GM12878 (cell line): ENCODE measurements at regions of chr1 and their contacts with region 1.

Region 1: GRCh38 chr1:192506741-192507155 is 68.8 kb upstream of the RGS1 start:
- DNase-seq: peak; percentile 66
- ATAC-seq: peak; percentile 99
- H3K4me3 ChIP-seq: no peak overlapping the region
- H3K27ac ChIP-seq: no peak overlapping the region
- H3K4me1 ChIP-seq: no peaks in the 10 kb centered on the region; the same call in 1 of the 2 replicates
- H3K27me3 ChIP-seq: no peaks in the 10 kb centered on the region
- CTCF ChIP-seq: peak; percentile 69 to 93 (median 70); a peak in 5 of 6 replicates
- EP300 ChIP-seq: no peak
- POLR2A ChIP-seq: no peak
- RAD21 ChIP-seq: peak; percentile 98

Region 2: GRCh38 chr1:192407206-192407605 is 99.5 kb before region 1 on chr1:
- CTCF ChIA-PET with region 1: no interaction called
- POLR2A ChIA-PET with region 1: no interaction called
- RAD21 ChIA-PET with region 1: no interaction called
- SMC1A ChIA-PET with region 1: no interaction called
- in situ Hi-C with region 1: no loop called
- intact Hi-C with region 1: no loop called
- DNase-seq: no peak
- ATAC-seq: no peak
- H3K4me3 ChIP-seq: no peak overlapping the region
- H3K27ac ChIP-seq: no peak overlapping the region
- H3K4me1 ChIP-seq: no peaks in the 10 kb centered on the region
- H3K27me3 ChIP-seq: no peaks in the 10 kb centered on the region
- CTCF ChIP-seq: no peak
- EP300 ChIP-seq: no peak
- POLR2A ChIP-seq: no peak
- RAD21 ChIP-seq: no peak

Region 3: GRCh38 chr1:192491804-192492554 is 14.8 kb before region 1 on chr1:
- CTCF ChIA-PET with region 1: interaction called, 16 read pairs
- POLR2A ChIA-PET with region 1: no interaction called
- RAD21 ChIA-PET with region 1: interaction called, 4 read pairs
- SMC1A ChIA-PET with region 1: interaction called, 8 read pairs
- in situ Hi-C with region 1: no loop called
- intact Hi-C with region 1: no loop called
- DNase-seq: no peak
- ATAC-seq: no peak
- H3K4me3 ChIP-seq: no peak overlapping the region
- H3K27ac ChIP-seq: no peak overlapping the region
- H3K4me1 ChIP-seq: no peaks in the 10 kb centered on the region
- H3K27me3 ChIP-seq: no peaks in the 10 kb centered on the region
- CTCF ChIP-seq: no peak
- EP300 ChIP-seq: no peak
- POLR2A ChIP-seq: no peak
- RAD21 ChIP-seq: no peak

Region 4: DNA sequence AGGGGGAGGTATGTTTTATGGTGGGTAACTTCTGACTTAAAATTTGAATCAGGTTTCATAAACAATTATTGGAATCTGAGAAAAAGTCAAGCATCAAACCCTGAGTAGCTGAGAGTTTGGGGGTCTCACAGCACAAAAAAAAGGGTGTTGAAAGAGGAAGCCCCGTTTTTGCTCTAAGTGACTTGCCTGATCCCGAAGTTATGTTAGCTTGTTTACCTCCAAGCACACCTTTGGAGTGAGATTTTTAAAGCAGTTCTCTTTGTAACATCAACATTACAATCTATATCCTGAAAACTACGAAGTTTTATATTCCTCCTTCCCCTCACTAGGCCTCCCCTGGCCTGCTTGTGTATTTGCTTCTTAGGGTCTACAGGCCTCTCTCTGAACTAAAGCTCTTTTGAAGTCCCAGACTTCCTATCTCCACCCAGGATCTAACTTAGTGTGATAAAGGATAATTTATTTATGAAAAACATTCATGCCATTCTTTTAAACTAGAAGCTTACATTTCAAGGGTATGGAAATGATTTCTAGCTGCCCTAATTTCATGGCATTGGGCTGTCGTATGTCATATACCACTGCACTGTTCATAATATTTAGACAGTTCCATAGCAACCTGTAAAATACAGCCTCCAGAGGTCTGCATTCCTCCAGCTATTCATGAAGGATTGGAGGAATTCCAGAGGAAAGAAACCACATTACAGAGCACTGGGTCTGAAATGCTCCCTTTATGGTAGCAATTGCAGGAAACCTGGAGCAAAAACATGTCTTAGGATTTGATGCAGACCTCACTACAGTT is 32.7 kb after region 1 on chr1:
- CTCF ChIA-PET with region 1: interaction called, 78 read pairs
- POLR2A ChIA-PET with region 1: interaction called, 10 read pairs
- RAD21 ChIA-PET with region 1: interaction called, 288 read pairs
- SMC1A ChIA-PET with region 1: interaction called, 81 read pairs
- in situ Hi-C with region 1: no loop called
- intact Hi-C with region 1: no loop called
- DNase-seq: no peak
- ATAC-seq: peak; percentile 40
- H3K4me3 ChIP-seq: no peak overlapping the region
- H3K27ac ChIP-seq: peak overlapping the region; percentile 81
- H3K4me1 ChIP-seq: peaks cover 24% of the 10 kb centered on the region
- H3K27me3 ChIP-seq: no peaks in the 10 kb centered on the region
- CTCF ChIP-seq: no peak
- EP300 ChIP-seq: no peak
- POLR2A ChIP-seq: no peak
- RAD21 ChIP-seq: no peak

Region 5: GRCh38 chr1:192550922-192551534 is 44.3 kb after region 1 on chr1:
- CTCF ChIA-PET with region 1: interaction called, 18 read pairs
- POLR2A ChIA-PET with region 1: interaction called, 123 read pairs
- RAD21 ChIA-PET with region 1: interaction called, 288 read pairs
- SMC1A ChIA-PET with region 1: interaction called, 81 read pairs
- in situ Hi-C with region 1: no loop called
- intact Hi-C with region 1: no loop called
- DNase-seq: peak; percentile 89
- ATAC-seq: peak; percentile 56
- H3K4me3 ChIP-seq: no peak overlapping the region
- H3K27ac ChIP-seq: peak overlapping the region; percentile 88
- H3K4me1 ChIP-seq: peaks cover 48% of the 10 kb centered on the region
- H3K27me3 ChIP-seq: no peaks in the 10 kb centered on the region
- CTCF ChIP-seq: no peak
- EP300 ChIP-seq: peak; percentile 71 to 85; a peak in 2 of 4 replicates
- POLR2A ChIP-seq: 0 out of 2 replicates have a peak, but pooled peaks have one; percentile 13
- RAD21 ChIP-seq: no peak

Region 6: GRCh38 chr1:192580351-192580962 is 73.7 kb after region 1 on chr1:
- CTCF ChIA-PET with region 1: interaction called, 35 read pairs
- POLR2A ChIA-PET with region 1: interaction called, 7 read pairs
- RAD21 ChIA-PET with region 1: interaction called, 35 read pairs
- SMC1A ChIA-PET with region 1: interaction called, 35 read pairs
- in situ Hi-C with region 1: no loop called
- intact Hi-C with region 1: loop called (anchors 1 kb)
- DNase-seq: peak; percentile 81
- ATAC-seq: peak; percentile 33
- H3K4me3 ChIP-seq: peak overlapping the region; percentile 31; the same call in 1 of the 2 replicates
- H3K27ac ChIP-seq: no peak overlapping the region
- H3K4me1 ChIP-seq: no peaks in the 10 kb centered on the region
- H3K27me3 ChIP-seq: no peaks in the 10 kb centered on the region
- CTCF ChIP-seq: peak; percentile 29 to 70 (median 55); a peak in 5 of 6 replicates
- EP300 ChIP-seq: peak in 1 of 2 experiments; percentile 60; a peak in 2 of 4 replicates
- POLR2A ChIP-seq: peak; percentile 70; the same call in 1 of the 2 replicates
- RAD21 ChIP-seq: peak; percentile 95

Region 7: DNA sequence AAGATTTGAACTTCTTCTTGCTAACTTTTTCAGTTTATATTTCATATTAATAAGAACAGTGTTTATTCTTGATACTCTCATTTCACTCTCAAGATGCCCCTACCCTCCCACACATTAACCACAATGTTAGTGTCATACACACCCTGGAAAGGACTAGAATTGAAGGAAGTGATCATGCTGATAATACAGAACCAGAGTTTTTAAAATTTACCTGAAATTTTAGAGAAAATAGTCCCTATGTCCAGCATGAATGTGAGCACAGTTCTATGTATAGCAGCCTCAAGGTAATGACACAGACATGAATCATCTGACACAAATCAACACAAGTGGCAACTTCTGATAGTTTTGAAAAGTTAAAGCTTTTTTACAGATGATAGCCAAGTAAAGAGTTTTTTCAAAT is 94.8 kb after region 1 on chr1:
- CTCF ChIA-PET with region 1: interaction called, 58 read pairs
- POLR2A ChIA-PET with region 1: interaction called, 5 read pairs
- RAD21 ChIA-PET with region 1: interaction called, 62 read pairs
- SMC1A ChIA-PET with region 1: interaction called, 56 read pairs
- in situ Hi-C with region 1: no loop called
- intact Hi-C with region 1: no loop called
- DNase-seq: no peak
- ATAC-seq: peak; percentile 43
- H3K4me3 ChIP-seq: no peak overlapping the region
- H3K27ac ChIP-seq: no peak overlapping the region
- H3K4me1 ChIP-seq: peaks cover 10% of the 10 kb centered on the region; the same call in 1 of the 2 replicates
- H3K27me3 ChIP-seq: no peaks in the 10 kb centered on the region
- CTCF ChIP-seq: no peak
- EP300 ChIP-seq: no peak; a peak in 1 of 4 replicates
- POLR2A ChIP-seq: no peak
- RAD21 ChIP-seq: no peak